Body of pancreas (tissue), 4 donors: ENCODE measurements at regions of chr19 and their contacts with region 1.

Region 1: DNA sequence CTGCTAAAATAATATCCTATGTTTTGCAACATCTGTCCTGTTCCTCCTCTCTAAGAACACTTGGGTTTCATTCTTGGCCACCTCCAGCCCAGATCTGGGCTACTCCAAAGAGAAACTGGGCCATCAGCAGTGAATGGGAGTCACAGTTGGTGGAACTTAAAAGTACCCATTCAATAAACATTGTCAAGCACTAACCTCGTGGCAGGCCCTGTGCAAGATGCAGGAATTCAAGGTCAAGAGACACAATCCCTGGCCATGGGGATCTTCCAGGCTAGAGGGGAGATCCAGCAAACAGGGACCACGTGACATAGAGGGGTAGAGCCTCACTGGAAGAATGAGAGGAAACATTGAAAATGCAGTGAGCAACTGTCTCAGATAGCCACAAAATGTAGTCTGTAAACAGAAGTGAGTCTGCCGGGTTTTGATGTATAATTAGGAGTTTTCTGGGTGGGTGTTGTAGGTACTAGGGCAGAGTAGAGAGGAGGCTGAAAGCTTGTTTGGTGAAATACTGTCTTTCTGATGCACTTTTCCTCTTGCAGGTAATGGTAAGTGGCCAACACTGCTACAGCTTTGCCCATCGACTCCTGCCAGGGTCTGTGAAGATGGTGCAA is 14.8 kb upstream of the EID2 start:
- DNase-seq: no peak
- ATAC-seq: no peak
- H3K4me3 ChIP-seq: no peak overlapping the region
- H3K27ac ChIP-seq: no peak overlapping the region
- H3K4me1 ChIP-seq: no peaks in the 10 kb centered on the region
- H3K27me3 ChIP-seq: no peaks in the 10 kb centered on the region
- CTCF ChIP-seq: no peak
- POLR2A ChIP-seq: no peak

Region 2: GRCh38 chr19:39372047-39372802 is 182.6 kb before region 1 on chr19:
- intact Hi-C with region 1: no loop called
- DNase-seq: peak; percentile 54 to 77 (median 67)
- ATAC-seq: peak; percentile 82
- H3K4me3 ChIP-seq: no peak overlapping the region
- H3K27ac ChIP-seq: peak overlapping the region; percentile 45 to 71 (median 65)
- H3K4me1 ChIP-seq: peaks cover 8% of the 10 kb centered on the region
- H3K27me3 ChIP-seq: no peaks in the 10 kb centered on the region
- CTCF ChIP-seq: no peak
- POLR2A ChIP-seq: no peak

Region 3: DNA sequence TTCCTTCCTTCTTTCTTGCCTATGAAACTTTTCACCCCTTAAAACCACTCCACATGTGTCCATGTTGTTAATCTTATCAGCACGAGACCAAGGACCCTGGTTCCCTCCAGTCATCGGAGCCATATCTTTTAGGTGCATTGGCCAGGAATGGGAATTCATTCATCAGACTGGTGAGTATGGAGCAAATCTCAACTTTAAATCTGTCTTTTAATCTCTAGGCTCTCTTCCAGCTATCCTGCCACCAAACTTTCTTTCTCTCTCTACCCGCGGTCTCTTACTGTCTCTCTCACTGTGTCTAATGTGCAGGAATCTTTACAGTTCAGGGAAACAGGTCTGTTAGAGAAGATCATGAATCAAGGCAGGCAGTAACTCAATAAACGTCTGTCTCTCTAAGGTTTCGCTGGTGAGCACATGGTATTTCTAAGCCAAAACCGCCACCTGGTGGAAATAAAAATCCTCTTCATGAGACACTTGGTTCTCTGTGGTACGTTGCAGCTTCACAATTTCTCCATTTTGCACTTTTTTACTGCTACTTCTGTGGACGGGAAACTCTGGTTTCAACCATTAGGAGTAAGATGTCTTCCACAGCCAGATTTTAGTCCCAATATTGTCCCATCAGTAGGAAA is 117.0 kb after region 1 on chr19:
- intact Hi-C with region 1: loop called (anchors 5 kb)
- DNase-seq: peak in 3 of 4 donors; percentile 31 to 59 (median 33)
- ATAC-seq: peak; percentile 66
- H3K4me3 ChIP-seq: no peak overlapping the region
- H3K27ac ChIP-seq: no peak overlapping the region
- H3K4me1 ChIP-seq: no peaks in the 10 kb centered on the region
- H3K27me3 ChIP-seq: no peaks in the 10 kb centered on the region
- CTCF ChIP-seq: peak; percentile 20 to 73 (median 64)
- POLR2A ChIP-seq: no peak